HCT116 (cell line): ENCODE measurements at regions of chr10 and their contacts with region 1.

Region 1: GRCh38 chr10:128263891-128264688 is 137.9 kb upstream of the MKI67 start:
- DNase-seq: peak; percentile 58
- ATAC-seq: peak; percentile 85
- H3K4me3 ChIP-seq: no peak overlapping the region
- H3K27ac ChIP-seq: no peak overlapping the region
- H3K4me1 ChIP-seq: no peaks in the 10 kb centered on the region
- H3K27me3 ChIP-seq: peaks cover 69% of the 10 kb centered on the region
- CTCF ChIP-seq: peak; percentile 57 to 88 (median 86); a peak in 5 of 6 replicates
- POLR2A ChIP-seq: no peak
- RAD21 ChIP-seq: peak; percentile 54

Region 2: DNA sequence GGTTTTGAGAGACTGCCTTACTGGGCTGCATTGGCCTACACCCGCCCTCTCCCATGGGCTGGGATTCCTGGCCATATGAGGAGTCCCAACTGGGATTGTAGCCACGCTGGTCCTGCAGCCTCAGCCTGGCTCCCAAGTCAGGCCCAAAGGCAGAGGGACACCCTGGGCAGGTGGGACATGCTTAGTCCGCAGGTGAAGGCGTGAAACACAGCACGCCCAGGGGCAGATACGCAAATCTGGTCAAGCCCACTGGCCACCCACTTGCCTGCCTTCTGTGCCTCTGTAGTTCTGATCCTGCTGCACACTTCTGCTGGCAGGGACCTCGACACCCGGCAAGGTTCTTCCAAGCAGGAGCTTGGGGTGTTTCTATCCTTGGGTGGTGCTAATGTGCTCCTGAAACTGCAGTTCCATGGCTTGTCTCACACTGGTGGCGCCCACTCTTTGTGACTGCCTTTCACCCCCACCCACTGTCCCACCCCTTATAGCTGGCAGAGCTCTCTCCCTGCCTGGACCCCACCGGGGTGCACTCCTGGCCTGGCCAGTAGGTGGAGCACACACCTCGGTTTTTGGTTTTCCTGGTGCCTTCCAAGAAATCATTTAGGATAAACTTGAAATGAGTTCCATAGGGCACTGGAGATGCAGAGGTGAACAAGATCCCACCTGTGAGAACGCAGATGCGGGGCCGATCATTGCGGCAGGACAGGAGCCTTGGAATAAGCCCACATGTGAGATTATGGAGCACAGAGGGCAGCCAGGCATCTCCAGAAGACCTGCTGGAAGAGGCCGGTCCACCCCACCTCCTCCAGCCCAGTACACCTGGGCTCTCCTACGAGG is 185.7 kb before region 1 on chr10:
- CTCF ChIA-PET with region 1: interaction called, 3 read pairs
- POLR2A ChIA-PET with region 1: no interaction called
- RAD21 ChIA-PET with region 1: no interaction called
- intact Hi-C with region 1: loop called (anchors 5 kb)
- DNase-seq: peak; percentile 28
- ATAC-seq: peak; percentile 98
- H3K4me3 ChIP-seq: no peak overlapping the region
- H3K27ac ChIP-seq: no peak overlapping the region
- H3K4me1 ChIP-seq: no peaks in the 10 kb centered on the region
- H3K27me3 ChIP-seq: no peaks in the 10 kb centered on the region
- CTCF ChIP-seq: peak; percentile 96 to 97 (median 97)
- POLR2A ChIP-seq: no peak
- RAD21 ChIP-seq: peak; percentile 94

Region 3: GRCh38 chr10:128150045-128150493 is 114.0 kb before region 1 on chr10:
- CTCF ChIA-PET with region 1: no interaction called
- POLR2A ChIA-PET with region 1: no interaction called
- RAD21 ChIA-PET with region 1: no interaction called
- intact Hi-C with region 1: no loop called
- DNase-seq: peak; percentile 53
- ATAC-seq: peak; percentile 97
- H3K4me3 ChIP-seq: no peak overlapping the region
- H3K27ac ChIP-seq: no peak overlapping the region
- H3K4me1 ChIP-seq: peaks cover 0 to 10% of the 10 kb centered on the region in 2 experiments; a peak in 2 of 4 replicates
- H3K27me3 ChIP-seq: no peaks in the 10 kb centered on the region
- CTCF ChIP-seq: peak; percentile 87 to 99 (median 98)
- POLR2A ChIP-seq: no peak
- RAD21 ChIP-seq: peak; percentile 95

Region 4: GRCh38 chr10:128530301-128530700 is 266.2 kb after region 1 on chr10:
- CTCF ChIA-PET with region 1: interaction called, 13 read pairs
- POLR2A ChIA-PET with region 1: no interaction called
- RAD21 ChIA-PET with region 1: interaction called, 3 to 4 read pairs
- intact Hi-C with region 1: loop called (anchors 1 kb)
- DNase-seq: peak; percentile 15
- ATAC-seq: peak; percentile 50; the same call in 1 of the 2 replicates
- H3K4me3 ChIP-seq: no peak overlapping the region
- H3K27ac ChIP-seq: no peak overlapping the region
- H3K4me1 ChIP-seq: no peaks in the 10 kb centered on the region
- H3K27me3 ChIP-seq: peaks cover 75% of the 10 kb centered on the region
- CTCF ChIP-seq: peak; percentile 53 to 86 (median 76); a peak in 5 of 6 replicates
- POLR2A ChIP-seq: no peak
- RAD21 ChIP-seq: peak; percentile 53

Region 5: DNA sequence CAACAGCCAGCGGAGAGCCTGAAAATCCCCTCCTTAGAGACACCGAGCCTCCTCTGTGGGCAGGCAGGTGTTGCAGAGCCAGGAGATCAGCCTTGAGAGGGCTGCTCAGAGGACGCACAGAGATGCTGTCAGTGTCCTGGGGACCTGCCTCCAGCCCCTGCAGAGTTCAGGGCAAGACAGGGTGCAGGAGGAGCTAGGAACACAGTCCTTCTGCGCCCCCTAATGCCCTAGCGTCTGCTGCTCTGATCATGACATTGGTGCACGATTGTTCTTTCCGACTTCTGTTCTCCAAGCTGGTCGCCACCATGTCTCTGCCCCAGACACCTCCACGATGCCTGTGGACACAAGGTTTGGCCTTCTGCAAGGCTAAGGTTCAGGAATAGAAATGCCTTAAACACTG is 475.8 kb after region 1 on chr10:
- CTCF ChIA-PET with region 1: interaction called, 13 read pairs
- POLR2A ChIA-PET with region 1: no interaction called
- RAD21 ChIA-PET with region 1: no interaction called
- intact Hi-C with region 1: loop called (anchors 5 kb)
- DNase-seq: peak; percentile 12
- ATAC-seq: peak; percentile 84
- H3K4me3 ChIP-seq: no peak overlapping the region
- H3K27ac ChIP-seq: no peak overlapping the region
- H3K4me1 ChIP-seq: no peaks in the 10 kb centered on the region
- H3K27me3 ChIP-seq: peaks cover 94% of the 10 kb centered on the region
- CTCF ChIP-seq: peak; percentile 31 to 36 (median 35); a peak in 4 of 6 replicates
- POLR2A ChIP-seq: no peak
- RAD21 ChIP-seq: peak; percentile 59

Region 6: GRCh38 chr10:128859738-128860386 is 595.8 kb after region 1 on chr10:
- CTCF ChIA-PET with region 1: interaction called, 9 read pairs
- POLR2A ChIA-PET with region 1: no interaction called
- RAD21 ChIA-PET with region 1: no interaction called
- intact Hi-C with region 1: loop called (anchors 1 kb)
- DNase-seq: peak; percentile 34
- ATAC-seq: peak; percentile 84
- H3K4me3 ChIP-seq: no peak overlapping the region
- H3K27ac ChIP-seq: no peak overlapping the region
- H3K4me1 ChIP-seq: no peaks in the 10 kb centered on the region
- H3K27me3 ChIP-seq: peaks cover 13% of the 10 kb centered on the region; the same call in 1 of the 2 replicates
- CTCF ChIP-seq: peak; percentile 60 to 90 (median 72); a peak in 5 of 6 replicates
- POLR2A ChIP-seq: no peak
- RAD21 ChIP-seq: peak; percentile 75

Region 7: GRCh38 chr10:129151281-129151680 is 887.2 kb after region 1 on chr10:
- CTCF ChIA-PET with region 1: no interaction called
- POLR2A ChIA-PET with region 1: no interaction called
- RAD21 ChIA-PET with region 1: no interaction called
- intact Hi-C with region 1: no loop called
- DNase-seq: no peak
- ATAC-seq: no peak
- H3K4me3 ChIP-seq: no peak overlapping the region
- H3K27ac ChIP-seq: no peak overlapping the region
- H3K4me1 ChIP-seq: no peaks in the 10 kb centered on the region
- H3K27me3 ChIP-seq: no peaks in the 10 kb centered on the region
- CTCF ChIP-seq: no peak
- POLR2A ChIP-seq: no peak
- RAD21 ChIP-seq: no peak